ENCODE measurements at regions of chr9 and their contacts with region 1.

Region 1: GRCh38 chr9:33024966-33025571 is at the start of gene DNAJA1:
- DNase-seq: peak; percentile 90 to 98 (median 96)
- ATAC-seq: peak; percentile 83
- H3K4me3 ChIP-seq: peak within 1 kb of the TSS; percentile 90
- H3K4me3 Mint-ChIP-seq: peak within 1 kb of the TSS; percentile 96
- H3K27ac ChIP-seq: peak within 1 kb of the TSS; percentile 99 to 100
- H3K27ac Mint-ChIP-seq: peak within 1 kb of the TSS; percentile 93
- H3K4me1 ChIP-seq: peaks cover 43% of the 10 kb centered on the region
- H3K4me1 Mint-ChIP-seq: peaks cover 73% of the 10 kb centered on the region
- H3K27me3 ChIP-seq: no peaks in the 10 kb centered on the region
- H3K27me3 Mint-ChIP-seq: no peaks in the 10 kb centered on the region
- CTCF ChIP-seq: no peak
- total RNA-seq, gene DNAJA1: 150 to 156 TPM

Region 2: GRCh38 chr9:32550562-32551433 is 474.3 kb before region 1 on chr9:
- CTCF ChIA-PET with region 1: no interaction called
- POLR2A ChIA-PET with region 1: interaction called, 23 read pairs
- intact Hi-C with region 1: loop called in 1 of 2 experiments (anchors 5 kb)
- DNase-seq: peak; percentile 92 to 98 (median 95)
- ATAC-seq: peak; percentile 80
- H3K4me3 ChIP-seq: peak overlapping the region; percentile 86
- H3K4me3 Mint-ChIP-seq: peak overlapping the region; percentile 95
- H3K27ac ChIP-seq: peak overlapping the region; percentile 96 to 97
- H3K27ac Mint-ChIP-seq: peak overlapping the region; percentile 99
- H3K4me1 ChIP-seq: peaks cover 30% of the 10 kb centered on the region
- H3K4me1 Mint-ChIP-seq: peaks cover 60% of the 10 kb centered on the region
- H3K27me3 ChIP-seq: no peaks in the 10 kb centered on the region
- H3K27me3 Mint-ChIP-seq: no peaks in the 10 kb centered on the region
- CTCF ChIP-seq: peak; percentile 50

Region 3: DNA sequence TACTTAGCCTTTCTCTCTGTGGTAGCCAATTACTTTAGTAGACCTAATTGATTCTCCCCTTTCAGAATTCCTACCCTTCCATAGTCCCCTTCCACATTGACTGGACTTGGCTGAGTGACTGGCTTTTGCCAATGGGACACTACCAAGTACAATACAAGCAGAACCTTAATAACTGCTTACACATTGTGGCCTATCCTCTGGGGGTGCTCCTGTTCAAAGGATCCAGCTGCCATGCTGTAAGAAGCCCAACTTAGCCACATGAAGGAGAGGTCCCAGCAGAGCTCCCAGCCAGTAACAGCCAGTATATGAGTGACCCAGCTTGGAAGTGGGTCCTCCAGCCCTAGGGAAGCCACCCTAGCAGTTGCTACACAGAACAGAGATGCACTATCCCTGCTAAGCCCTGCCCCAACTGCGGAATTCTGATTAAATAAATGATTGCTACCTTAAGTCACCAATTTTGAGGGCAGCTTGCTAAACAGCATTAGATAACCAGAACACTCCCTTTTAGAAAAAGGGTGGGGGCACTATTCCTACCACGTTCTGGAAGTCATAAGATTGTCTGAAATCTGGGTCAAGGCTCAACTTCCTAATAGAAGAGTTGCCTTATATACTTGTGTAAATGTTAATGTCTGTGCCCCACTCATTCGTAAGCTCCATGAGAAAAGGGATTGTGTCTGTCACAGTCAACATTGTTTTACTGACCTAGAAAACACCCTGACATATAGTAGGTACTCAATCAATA is 12.6 kb before region 1 on chr9:
- CTCF ChIA-PET with region 1: no interaction called
- POLR2A ChIA-PET with region 1: interaction called, 14 read pairs
- intact Hi-C with region 1: no loop called
- DNase-seq: no peak
- ATAC-seq: no peak
- H3K4me3 ChIP-seq: no peak overlapping the region
- H3K4me3 Mint-ChIP-seq: no peak overlapping the region
- H3K27ac ChIP-seq: no peak overlapping the region
- H3K27ac Mint-ChIP-seq: no peak overlapping the region
- H3K4me1 ChIP-seq: no peaks in the 10 kb centered on the region
- H3K4me1 Mint-ChIP-seq: no peaks in the 10 kb centered on the region
- H3K27me3 ChIP-seq: no peaks in the 10 kb centered on the region
- H3K27me3 Mint-ChIP-seq: no peaks in the 10 kb centered on the region
- CTCF ChIP-seq: no peak

Region 4: GRCh38 chr9:33044127-33044673 is 19.1 kb after region 1 on chr9:
- CTCF ChIA-PET with region 1: no interaction called
- POLR2A ChIA-PET with region 1: interaction called, 19 read pairs
- intact Hi-C with region 1: no loop called
- DNase-seq: peak; percentile 18 to 89 (median 51)
- ATAC-seq: peak; percentile 80
- H3K4me3 ChIP-seq: peak overlapping the region; percentile 63
- H3K4me3 Mint-ChIP-seq: peak overlapping the region; percentile 83
- H3K27ac ChIP-seq: peak overlapping the region; percentile 3 to 37
- H3K27ac Mint-ChIP-seq: peak overlapping the region; percentile 80
- H3K4me1 ChIP-seq: peaks cover 15% of the 10 kb centered on the region
- H3K4me1 Mint-ChIP-seq: peaks cover 24% of the 10 kb centered on the region
- H3K27me3 ChIP-seq: no peaks in the 10 kb centered on the region
- H3K27me3 Mint-ChIP-seq: no peaks in the 10 kb centered on the region
- CTCF ChIP-seq: no peak

Region 5: GRCh38 chr9:33264473-33265177 is 239.6 kb after region 1 on chr9 and contains the starts of genes BAG1 and CHMP5:
- CTCF ChIA-PET with region 1: no interaction called
- POLR2A ChIA-PET with region 1: interaction called, 14 read pairs
- intact Hi-C with region 1: loop called in 1 of 2 experiments (anchors 2 kb)
- DNase-seq: peak; percentile 99 to 100 (median 100)
- ATAC-seq: peak; percentile 96
- H3K4me3 ChIP-seq: peak within 1 kb of the TSS; percentile 94
- H3K4me3 Mint-ChIP-seq: peak within 1 kb of the TSS; percentile 96
- H3K27ac ChIP-seq: peak within 1 kb of the TSS; percentile 59 to 86
- H3K27ac Mint-ChIP-seq: peak within 1 kb of the TSS; percentile 91
- H3K4me1 ChIP-seq: peaks cover 31% of the 10 kb centered on the region
- H3K4me1 Mint-ChIP-seq: peaks cover 63% of the 10 kb centered on the region
- H3K27me3 ChIP-seq: no peaks in the 10 kb centered on the region
- H3K27me3 Mint-ChIP-seq: no peaks in the 10 kb centered on the region
- CTCF ChIP-seq: no peak
- total RNA-seq, gene BAG1: 58.0 to 61.4 TPM
- total RNA-seq, gene CHMP5: 17.4 to 18.6 TPM

Measured in CD4-positive, alpha-beta T cell (primary cell).